ENCODE measurements at regions of chr1 and their contacts with region 1.

Region 1: DNA sequence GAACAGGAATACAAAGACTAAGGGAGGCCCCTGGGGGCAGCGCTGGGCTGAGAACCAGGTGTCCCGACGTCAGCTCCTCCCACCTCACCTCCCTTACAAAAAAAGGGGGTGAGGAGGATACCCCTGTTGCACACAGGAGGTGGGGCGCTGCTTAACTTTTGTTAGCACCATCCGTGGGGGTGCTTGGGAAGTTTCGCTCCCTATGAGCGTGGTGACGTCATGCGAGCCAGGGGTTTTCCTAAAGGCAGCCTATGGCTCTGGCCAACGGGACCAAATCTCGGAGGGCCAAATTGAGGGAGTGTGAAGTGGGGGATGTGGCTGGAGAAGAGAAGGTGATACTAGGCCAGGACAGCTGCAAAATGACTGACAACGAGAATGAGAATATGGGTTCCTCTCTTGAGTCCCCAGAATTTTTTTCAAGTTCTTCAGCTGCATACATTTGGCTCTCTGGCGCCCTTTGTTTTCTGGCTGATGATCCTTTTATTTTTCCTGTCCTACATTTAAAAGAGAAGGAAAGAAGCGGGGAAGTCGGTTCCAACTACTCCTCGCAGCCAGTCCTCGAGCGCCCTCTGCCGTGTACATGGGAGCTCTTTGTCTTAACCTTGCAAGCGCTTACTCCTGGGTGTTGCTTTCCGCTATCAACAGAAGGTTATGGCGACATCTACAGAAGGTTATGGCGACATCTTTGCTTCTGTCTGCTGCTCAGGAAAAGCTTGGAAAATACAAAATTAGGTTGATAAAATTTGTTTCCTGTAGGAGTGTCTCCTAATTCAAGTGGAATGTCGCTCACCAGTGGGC is 48.0 kb upstream of the ZC3H11B start:
- DNase-seq: peak; percentile 90
- ATAC-seq: peak; percentile 79 to 91 (median 86)
- H3K4me3 ChIP-seq: peak overlapping the region in 7 of 10 donors; percentile 9 to 40 (median 23)
- H3K27ac ChIP-seq: peak overlapping the region in 3 of 10 donors; percentile 2 to 58 (median 36)
- H3K4me1 ChIP-seq: peaks cover 0 to 36% (median 25%) of the 10 kb centered on the region in 9 donors
- H3K27me3 ChIP-seq: no peaks in the 10 kb centered on the region
- CTCF ChIP-seq: peak; percentile 49 to 90 (median 81)

Region 2: DNA sequence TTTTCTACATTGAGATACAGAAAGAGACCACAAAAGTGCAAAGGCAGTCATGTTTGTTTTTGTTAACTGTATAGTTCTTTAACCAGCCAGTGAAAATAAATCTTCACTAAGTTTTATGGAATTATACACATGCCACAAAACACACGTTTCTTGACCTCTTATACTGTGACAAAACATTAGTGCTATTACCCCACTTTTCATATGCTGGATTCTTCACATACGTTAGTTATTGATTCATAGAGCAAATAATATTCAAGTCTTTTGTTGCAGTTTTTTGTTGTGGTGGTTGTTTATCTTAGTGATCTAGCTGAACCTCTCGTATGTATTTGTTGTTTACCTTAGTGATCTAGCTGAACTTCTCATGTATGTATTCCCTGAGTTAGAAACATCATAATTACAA is 459.2 kb before region 1 on chr1:
- intact Hi-C with region 1: loop called in 2 of 10 experiments (anchors 5 to 10 kb)
- DNase-seq: no peak
- ATAC-seq: no peak
- H3K4me3 ChIP-seq: no peak overlapping the region
- H3K27ac ChIP-seq: no peak overlapping the region
- H3K4me1 ChIP-seq: no peaks in the 10 kb centered on the region
- H3K27me3 ChIP-seq: no peaks in the 10 kb centered on the region
- CTCF ChIP-seq: no peak

Region 3: DNA sequence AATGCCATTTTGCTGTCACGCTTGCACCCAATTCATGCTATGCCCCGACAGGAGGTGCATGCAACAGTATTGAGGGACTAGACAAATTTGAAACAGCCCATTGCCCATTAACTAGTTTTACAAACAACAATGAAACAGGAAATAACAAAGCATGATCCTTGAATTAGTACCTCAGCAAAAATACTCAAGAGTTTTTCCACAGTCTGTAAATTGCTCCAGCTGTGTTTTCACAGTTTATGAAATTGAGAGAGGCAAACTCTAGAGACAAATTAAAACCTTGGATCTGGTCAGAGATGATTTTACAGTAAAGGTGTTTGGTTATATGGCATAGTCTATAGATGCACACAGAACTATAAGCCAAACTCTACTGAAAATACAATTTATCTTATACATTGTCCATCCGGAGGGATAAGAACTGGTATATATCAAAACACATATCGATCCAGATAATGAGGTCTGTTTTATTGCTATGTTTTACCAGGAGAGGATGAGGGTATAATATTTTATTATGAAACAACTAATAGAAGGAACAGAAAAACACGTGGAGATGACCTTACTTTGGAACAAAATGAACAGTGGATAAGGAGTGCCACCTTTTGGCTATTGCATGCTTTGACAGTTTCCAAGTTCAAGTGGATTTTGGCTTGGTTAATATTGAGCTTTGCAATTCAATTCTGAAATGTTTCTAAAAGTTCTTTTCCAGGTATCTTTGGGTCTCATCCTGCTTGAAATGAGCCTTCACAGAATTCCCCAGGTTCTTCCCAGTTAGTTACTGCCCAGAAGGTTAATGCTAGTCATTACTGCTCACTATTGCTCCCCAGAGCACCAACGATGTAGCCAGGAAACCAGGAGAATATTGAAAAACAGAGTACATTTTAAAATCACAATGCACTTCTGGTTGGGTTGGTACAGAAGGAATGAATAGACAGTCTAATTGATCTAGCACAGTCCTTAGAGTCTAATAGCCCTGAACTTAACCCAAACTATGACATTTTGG is 93.6 kb before region 1 on chr1:
- intact Hi-C with region 1: loop called in 4 of 10 experiments (anchors 5 to 10 kb)
- DNase-seq: peak in 1 of 2 donors; percentile 15
- ATAC-seq: peak in 7 of 8 donors; percentile 44 to 77 (median 65)
- H3K4me3 ChIP-seq: no peak overlapping the region
- H3K27ac ChIP-seq: no peak overlapping the region
- H3K4me1 ChIP-seq: peaks cover 0 to 8% (median 0%) of the 10 kb centered on the region in 9 donors
- H3K27me3 ChIP-seq: no peaks in the 10 kb centered on the region
- CTCF ChIP-seq: peak in 8 of 9 donors; percentile 19 to 71 (median 58)

Region 4: GRCh38 chr1:219744652-219745469 is 84.0 kb after region 1 on chr1:
- intact Hi-C with region 1: loop called in 3 of 10 experiments (anchors 5 to 10 kb)
- DNase-seq: no peak
- ATAC-seq: peak in 2 of 8 donors; percentile 30 to 38
- H3K4me3 ChIP-seq: no peak overlapping the region
- H3K27ac ChIP-seq: no peak overlapping the region
- H3K4me1 ChIP-seq: peaks cover 0 to 28% (median 4%) of the 10 kb centered on the region in 9 donors
- H3K27me3 ChIP-seq: no peaks in the 10 kb centered on the region
- CTCF ChIP-seq: no peak

Region 5: GRCh38 chr1:219805193-219805592 is 144.3 kb after region 1 on chr1:
- intact Hi-C with region 1: loop called in 7 of 10 experiments (anchors 5 to 10 kb)
- DNase-seq: no peak
- ATAC-seq: no peak
- H3K4me3 ChIP-seq: no peak overlapping the region
- H3K27ac ChIP-seq: no peak overlapping the region
- H3K4me1 ChIP-seq: peaks cover 0 to 5% (median 0%) of the 10 kb centered on the region in 9 donors
- H3K27me3 ChIP-seq: peaks cover 0 to 4% (median 0%) of the 10 kb centered on the region in 7 donors
- CTCF ChIP-seq: peak in 7 of 9 donors; percentile 15 to 47 (median 34)